Naive thymus-derived CD4-positive, alpha-beta T cell (primary cell): ENCODE measurements at regions of chr1 and their contacts with region 1.

Region 1: DNA sequence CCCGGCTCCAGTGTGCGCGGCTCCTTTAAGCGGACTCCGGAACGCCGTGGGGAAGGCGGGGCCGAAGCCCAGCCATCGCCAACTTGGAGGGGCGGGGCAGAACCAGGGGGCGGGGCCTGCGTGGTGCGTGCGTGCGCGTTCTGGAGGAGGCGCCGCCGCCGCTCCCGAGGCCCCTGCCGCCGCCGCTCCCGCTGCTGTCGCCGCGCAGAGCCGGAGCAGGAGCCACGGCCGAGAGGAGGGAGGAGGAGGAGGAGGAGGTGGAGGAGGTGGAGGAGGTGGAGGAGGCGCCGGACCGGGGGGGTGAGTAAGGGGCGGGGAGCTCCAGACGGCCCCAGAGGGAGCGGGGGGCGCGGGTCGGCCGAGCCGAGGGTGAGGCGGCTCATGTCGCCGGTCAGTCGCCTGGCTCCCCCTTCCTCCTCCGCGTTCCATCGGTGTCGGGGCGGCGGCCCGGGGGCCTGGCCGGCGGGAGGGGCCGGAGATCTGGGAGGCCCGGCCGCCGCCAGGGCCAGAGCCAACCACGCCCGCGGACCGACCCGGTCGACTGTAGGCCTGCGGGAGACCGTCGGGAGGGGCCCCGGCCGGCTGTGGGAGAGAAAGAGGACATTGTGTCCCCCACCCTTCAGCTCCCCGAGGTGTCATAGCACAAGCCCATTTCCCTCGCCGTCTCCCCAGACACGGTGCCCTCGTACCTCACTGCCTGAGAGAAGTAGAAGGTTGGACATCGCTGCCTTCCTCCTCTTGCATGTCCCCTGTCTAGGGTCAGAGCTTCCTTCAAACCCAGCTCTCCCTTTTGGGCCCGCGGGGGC is at the start of gene RAP1A:
- DNase-seq: peak; percentile 80 to 95 (median 90)
- ATAC-seq: peak; percentile 93
- H3K4me3 ChIP-seq: peak within 1 kb of the TSS; percentile 88
- H3K4me3 Mint-ChIP-seq: peak within 1 kb of the TSS; percentile 93 to 99 (median 96)
- H3K27ac ChIP-seq: peak within 1 kb of the TSS; percentile 91
- H3K27ac Mint-ChIP-seq: peak within 1 kb of the TSS; percentile 86 to 98 (median 95)
- H3K4me1 ChIP-seq: peaks cover 46 to 64% of the 10 kb centered on the region in 2 donors
- H3K4me1 Mint-ChIP-seq: peaks cover 57 to 82% (median 76%) of the 10 kb centered on the region in 7 donors
- H3K27me3 ChIP-seq: no peaks in the 10 kb centered on the region
- H3K27me3 Mint-ChIP-seq: no peaks in the 10 kb centered on the region
- total RNA-seq, gene RAP1A: 89.8 to 183 (median 107) TPM

Region 2: GRCh38 chr1:111139956-111140679 is 479.7 kb before region 1 on chr1 and contains the starts of genes CEPT1 and DRAM2:
- CTCF ChIA-PET with region 1: no interaction called
- POLR2A ChIA-PET with region 1: no interaction called
- intact Hi-C with region 1: loop called in 1 of 2 experiments (anchors 5 kb)
- DNase-seq: peak; percentile 77 to 93 (median 89)
- ATAC-seq: peak; percentile 95
- H3K4me3 ChIP-seq: peak within 1 kb of the TSS; percentile 91
- H3K4me3 Mint-ChIP-seq: peak within 1 kb of the TSS; percentile 87 to 100 (median 98)
- H3K27ac ChIP-seq: peak within 1 kb of the TSS; percentile 93
- H3K27ac Mint-ChIP-seq: peak within 1 kb of the TSS; percentile 91 to 100 (median 97)
- H3K4me1 ChIP-seq: peaks cover 18 to 22% of the 10 kb centered on the region in 2 donors
- H3K4me1 Mint-ChIP-seq: peaks cover 40 to 75% (median 57%) of the 10 kb centered on the region in 7 donors
- H3K27me3 ChIP-seq: no peaks in the 10 kb centered on the region
- H3K27me3 Mint-ChIP-seq: no peaks in the 10 kb centered on the region
- total RNA-seq, gene CEPT1: 39.1 to 57.5 (median 40.2) TPM
- total RNA-seq, gene DRAM2: 26.9 to 51.6 (median 43.5) TPM

Region 3: DNA sequence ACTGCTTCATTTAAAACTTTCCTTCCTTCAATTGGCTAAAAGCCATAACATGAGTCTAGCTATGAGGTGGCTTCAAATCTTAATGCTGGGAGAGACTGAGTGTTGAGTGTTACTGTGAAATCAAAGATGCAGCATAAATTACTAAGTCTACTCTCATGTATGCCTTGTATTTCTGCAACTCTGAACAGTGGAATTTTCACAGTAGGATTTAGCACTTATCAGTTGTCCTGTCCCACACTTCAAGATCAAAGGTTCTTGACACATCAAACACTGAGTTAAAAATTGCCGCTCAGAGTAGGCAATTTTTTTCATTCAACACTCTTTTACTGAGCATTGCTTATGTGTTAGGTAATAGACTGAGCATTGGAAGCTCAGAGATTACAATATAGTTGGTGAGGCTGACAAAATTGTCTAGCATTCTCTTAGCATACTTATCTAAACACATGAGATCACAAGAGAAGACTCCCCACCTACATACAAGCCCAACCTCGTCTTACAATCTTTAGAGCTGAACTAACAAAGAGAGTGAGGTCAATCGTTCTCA is 60.0 kb before region 1 on chr1:
- CTCF ChIA-PET with region 1: no interaction called
- POLR2A ChIA-PET with region 1: interaction called, 5 read pairs
- intact Hi-C with region 1: loop called in 1 of 2 experiments (anchors 5 kb)
- DNase-seq: no peak
- ATAC-seq: no peak
- H3K4me3 ChIP-seq: no peak overlapping the region
- H3K4me3 Mint-ChIP-seq: no peak overlapping the region
- H3K27ac ChIP-seq: no peak overlapping the region
- H3K27ac Mint-ChIP-seq: no peak overlapping the region
- H3K4me1 ChIP-seq: no peaks in the 10 kb centered on the region
- H3K4me1 Mint-ChIP-seq: peaks cover 0 to 6% (median 4%) of the 10 kb centered on the region in 7 donors
- H3K27me3 ChIP-seq: no peaks in the 10 kb centered on the region
- H3K27me3 Mint-ChIP-seq: peaks cover 0 to 4% (median 0%) of the 10 kb centered on the region in 5 donors

Region 4: DNA sequence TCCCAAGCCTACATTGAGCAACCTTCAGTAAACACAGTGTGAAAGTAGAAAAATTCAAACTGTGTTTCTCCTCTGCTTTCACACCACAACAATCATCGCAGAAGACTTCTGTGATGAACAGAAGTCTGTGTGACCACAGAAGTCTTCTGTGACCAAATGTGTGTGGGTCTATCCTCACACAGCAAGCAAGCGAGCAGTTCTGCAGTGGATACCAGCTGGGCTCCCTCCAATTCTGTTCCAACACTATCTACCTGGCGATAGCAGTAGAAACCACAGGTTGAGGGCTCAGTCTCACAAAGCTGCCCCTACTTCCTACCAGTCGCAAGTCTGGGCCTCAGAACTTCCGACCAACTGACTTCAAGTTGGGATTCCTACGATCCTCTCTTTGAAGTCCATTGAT is 21.3 kb before region 1 on chr1:
- CTCF ChIA-PET with region 1: interaction called, 6 read pairs
- POLR2A ChIA-PET with region 1: interaction called, 173 read pairs
- intact Hi-C with region 1: loop called in 1 of 2 experiments (anchors 1 kb)
- DNase-seq: peak in 6 of 9 donors; percentile 18 to 43 (median 29)
- ATAC-seq: peak; percentile 68
- H3K4me3 ChIP-seq: peak overlapping the region; percentile 0
- H3K4me3 Mint-ChIP-seq: peak overlapping the region; percentile 45 to 79 (median 61)
- H3K27ac ChIP-seq: peak overlapping the region; percentile 30
- H3K27ac Mint-ChIP-seq: peak overlapping the region; percentile 61 to 89 (median 78)
- H3K4me1 ChIP-seq: peaks cover 71 to 100% of the 10 kb centered on the region in 2 donors
- H3K4me1 Mint-ChIP-seq: peaks cover 62 to 98% (median 95%) of the 10 kb centered on the region in 7 donors
- H3K27me3 ChIP-seq: no peaks in the 10 kb centered on the region
- H3K27me3 Mint-ChIP-seq: no peaks in the 10 kb centered on the region

Region 5: DNA sequence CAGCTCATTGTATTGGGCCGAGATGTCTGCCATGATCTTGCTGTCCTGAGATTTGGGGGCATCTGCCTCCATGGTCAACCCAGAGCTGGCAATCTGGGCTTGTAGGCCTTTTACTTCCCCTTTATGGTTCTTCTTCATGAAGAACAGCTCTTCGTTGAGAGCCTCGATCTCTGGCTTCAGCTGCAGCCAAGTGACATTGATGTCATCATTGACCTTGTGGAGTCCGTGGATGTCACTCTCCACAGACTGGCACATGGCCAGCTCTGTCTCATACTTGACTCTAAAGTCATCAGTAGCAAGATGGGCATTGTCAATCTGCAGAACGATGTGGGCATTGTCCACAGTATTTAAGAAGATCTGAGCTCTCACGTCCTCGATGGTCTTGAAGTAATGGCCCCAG is 29.0 kb after region 1 on chr1:
- CTCF ChIA-PET with region 1: interaction called, 5 read pairs
- POLR2A ChIA-PET with region 1: interaction called, 11 read pairs
- intact Hi-C with region 1: loop called in 1 of 2 experiments (anchors 1 kb)
- DNase-seq: no peak
- ATAC-seq: no peak
- H3K4me3 ChIP-seq: no peak overlapping the region
- H3K4me3 Mint-ChIP-seq: peak overlapping the region in 8 of 10 donors; percentile 56 to 88 (median 66)
- H3K27ac ChIP-seq: no peak overlapping the region
- H3K27ac Mint-ChIP-seq: peak overlapping the region; percentile 28 to 86 (median 77)
- H3K4me1 ChIP-seq: peaks cover 41 to 52% of the 10 kb centered on the region in 2 donors
- H3K4me1 Mint-ChIP-seq: peaks cover 62 to 96% (median 85%) of the 10 kb centered on the region in 7 donors
- H3K27me3 ChIP-seq: no peaks in the 10 kb centered on the region
- H3K27me3 Mint-ChIP-seq: no peaks in the 10 kb centered on the region

Region 6: GRCh38 chr1:112619520-112620376 is 999.9 kb after region 1 on chr1 and contains the start of gene CAPZA1:
- CTCF ChIA-PET with region 1: no interaction called
- POLR2A ChIA-PET with region 1: no interaction called
- intact Hi-C with region 1: loop called in 1 of 2 experiments (anchors 10 kb)
- DNase-seq: peak; percentile 83 to 93 (median 91)
- ATAC-seq: peak; percentile 89
- H3K4me3 ChIP-seq: peak within 1 kb of the TSS; percentile 93
- H3K4me3 Mint-ChIP-seq: peak within 1 kb of the TSS; percentile 98 to 100 (median 99)
- H3K27ac ChIP-seq: peak within 1 kb of the TSS; percentile 100
- H3K27ac Mint-ChIP-seq: peak within 1 kb of the TSS; percentile 99 to 100 (median 100)
- H3K4me1 ChIP-seq: peaks cover 19 to 21% of the 10 kb centered on the region in 2 donors
- H3K4me1 Mint-ChIP-seq: peaks cover 27 to 55% (median 46%) of the 10 kb centered on the region in 7 donors
- H3K27me3 ChIP-seq: no peaks in the 10 kb centered on the region
- H3K27me3 Mint-ChIP-seq: peaks cover 0 to 1% (median 0%) of the 10 kb centered on the region in 5 donors
- total RNA-seq, gene CAPZA1: 114 to 237 (median 143) TPM